ENCODE measurements at regions of chr6 and their contacts with region 1.

Region 1: DNA sequence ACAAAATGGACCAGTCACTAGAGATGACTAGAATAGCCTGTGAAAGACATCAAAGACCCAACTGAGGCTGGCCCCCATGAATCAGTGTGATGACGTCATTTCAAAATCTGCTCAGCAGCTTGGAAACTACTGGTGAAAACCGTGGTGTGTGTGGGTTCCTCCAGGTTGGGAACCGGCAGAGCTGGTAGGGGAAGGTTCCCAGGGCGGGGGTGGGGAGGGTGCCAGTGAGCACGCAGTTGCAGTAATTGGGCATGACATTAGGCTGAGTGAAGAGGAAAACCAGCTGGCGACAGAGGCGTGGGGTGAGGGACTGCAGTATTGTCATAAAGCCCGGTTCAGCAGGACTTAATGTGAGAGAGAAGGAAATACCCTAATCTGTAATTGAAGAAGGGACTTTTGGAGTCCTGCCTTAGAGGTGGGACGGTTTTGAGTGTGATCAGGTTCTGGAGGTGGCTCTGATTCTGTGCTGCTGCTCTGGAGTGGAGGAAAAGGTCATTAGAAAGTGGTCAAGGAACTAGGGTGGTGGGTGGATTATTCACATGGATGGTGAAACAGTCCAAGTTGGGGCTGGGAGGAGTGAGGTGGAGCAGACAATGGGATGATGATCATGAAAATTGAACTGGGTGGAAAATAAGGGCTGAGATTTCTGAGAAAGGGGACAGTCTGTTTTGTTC is 52.0 kb upstream of the MTHFD1L start:
- DNase-seq: no peak
- ATAC-seq: no peak
- H3K4me3 Mint-ChIP-seq: no peak overlapping the region
- H3K27ac Mint-ChIP-seq: no peak overlapping the region
- H3K4me1 Mint-ChIP-seq: peaks cover 7% of the 10 kb centered on the region; the same call in 1 of the 2 replicates
- H3K27me3 Mint-ChIP-seq: no peaks in the 10 kb centered on the region; the same call in 1 of the 2 replicates
- CTCF ChIP-seq: no peak

Region 2: GRCh38 chr6:150079604-150080003 is 733.9 kb before region 1 on chr6:
- CTCF ChIA-PET with region 1: interaction called, 12 read pairs
- POLR2A ChIA-PET with region 1: no interaction called
- DNase-seq: no peak
- ATAC-seq: peak; percentile 73
- H3K4me3 Mint-ChIP-seq: no peak overlapping the region
- H3K27ac Mint-ChIP-seq: no peak overlapping the region
- H3K4me1 Mint-ChIP-seq: peaks cover 11% of the 10 kb centered on the region; the same call in 1 of the 2 replicates
- H3K27me3 Mint-ChIP-seq: peaks cover 7% of the 10 kb centered on the region; the same call in 1 of the 2 replicates
- CTCF ChIP-seq: no peak

Region 3: GRCh38 chr6:150417899-150418826 is 395.3 kb before region 1 on chr6:
- CTCF ChIA-PET with region 1: interaction called, 40 read pairs
- POLR2A ChIA-PET with region 1: interaction called, 6 read pairs
- DNase-seq: no peak
- ATAC-seq: peak; percentile 67
- H3K4me3 Mint-ChIP-seq: no peak overlapping the region
- H3K27ac Mint-ChIP-seq: no peak overlapping the region
- H3K4me1 Mint-ChIP-seq: peaks cover 6% of the 10 kb centered on the region
- H3K27me3 Mint-ChIP-seq: no peaks in the 10 kb centered on the region
- CTCF ChIP-seq: no peak

Region 4: DNA sequence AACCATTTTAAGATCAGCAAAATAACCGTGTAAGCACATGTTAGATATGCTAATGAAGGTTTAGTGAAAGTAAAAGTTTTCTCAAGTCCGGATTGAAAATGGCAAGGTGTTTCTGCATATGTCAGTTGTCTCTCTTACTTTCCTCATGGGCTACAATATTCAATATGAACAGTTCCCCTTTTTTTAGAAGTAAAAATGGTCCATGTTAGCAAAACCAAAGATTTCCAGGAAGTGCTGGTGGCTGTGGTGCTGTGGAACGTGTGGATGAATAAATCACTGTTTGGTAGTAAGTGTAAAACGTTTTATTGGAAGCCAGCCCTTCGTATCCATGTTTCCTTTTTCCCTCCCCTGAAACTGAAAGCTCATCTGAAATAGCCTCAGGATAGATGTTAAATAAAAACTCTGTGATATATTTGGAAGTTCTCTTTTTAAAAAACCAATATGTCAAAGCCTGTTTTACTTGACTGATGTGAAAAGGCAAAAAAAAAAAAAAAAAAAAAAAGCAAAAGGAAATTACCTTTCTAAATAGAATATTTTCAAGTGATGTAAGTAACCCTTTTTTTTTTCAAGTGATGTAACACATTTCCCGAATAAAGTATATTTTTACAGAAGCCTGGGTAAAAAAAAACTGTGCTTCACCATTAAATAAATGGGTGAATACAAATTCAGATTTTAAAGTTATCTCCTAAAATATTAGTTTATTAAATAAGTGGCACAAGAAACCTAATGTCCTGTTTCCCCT is 171.9 kb before region 1 on chr6:
- CTCF ChIA-PET with region 1: no interaction called
- POLR2A ChIA-PET with region 1: no interaction called
- DNase-seq: no peak
- ATAC-seq: no peak
- H3K4me3 Mint-ChIP-seq: no peak overlapping the region
- H3K27ac Mint-ChIP-seq: no peak overlapping the region
- H3K4me1 Mint-ChIP-seq: peaks cover 4% of the 10 kb centered on the region
- H3K27me3 Mint-ChIP-seq: no peaks in the 10 kb centered on the region
- CTCF ChIP-seq: no peak

Region 5: DNA sequence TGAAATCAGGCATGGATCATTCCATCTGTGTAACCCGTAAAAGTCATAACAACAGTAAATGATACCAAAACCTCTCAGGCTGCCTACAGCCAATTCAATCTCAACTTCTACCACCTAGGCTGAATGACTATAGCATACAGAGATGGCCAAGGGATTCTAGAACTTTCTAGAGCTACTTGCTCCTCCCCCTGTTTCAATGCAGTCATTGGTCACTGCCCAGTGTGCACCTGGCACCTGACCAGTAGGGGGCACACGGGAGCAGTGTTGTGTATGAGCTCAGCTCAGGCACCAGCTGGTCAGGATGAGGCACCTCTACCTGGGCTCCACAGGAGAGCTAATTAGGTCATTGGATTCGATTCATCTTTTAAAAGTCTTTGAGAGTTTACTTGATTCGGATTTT is 127.6 kb before region 1 on chr6:
- CTCF ChIA-PET with region 1: interaction called, 43 read pairs
- POLR2A ChIA-PET with region 1: no interaction called
- DNase-seq: peak; percentile 87
- ATAC-seq: peak; percentile 98
- H3K4me3 Mint-ChIP-seq: no peak overlapping the region
- H3K27ac Mint-ChIP-seq: no peak overlapping the region
- H3K4me1 Mint-ChIP-seq: 0 out of 2 replicates have a peak, but pooled peaks cover 3% of the 10 kb centered on the region
- H3K27me3 Mint-ChIP-seq: no peaks in the 10 kb centered on the region
- CTCF ChIP-seq: peak; percentile 84

Region 6: DNA sequence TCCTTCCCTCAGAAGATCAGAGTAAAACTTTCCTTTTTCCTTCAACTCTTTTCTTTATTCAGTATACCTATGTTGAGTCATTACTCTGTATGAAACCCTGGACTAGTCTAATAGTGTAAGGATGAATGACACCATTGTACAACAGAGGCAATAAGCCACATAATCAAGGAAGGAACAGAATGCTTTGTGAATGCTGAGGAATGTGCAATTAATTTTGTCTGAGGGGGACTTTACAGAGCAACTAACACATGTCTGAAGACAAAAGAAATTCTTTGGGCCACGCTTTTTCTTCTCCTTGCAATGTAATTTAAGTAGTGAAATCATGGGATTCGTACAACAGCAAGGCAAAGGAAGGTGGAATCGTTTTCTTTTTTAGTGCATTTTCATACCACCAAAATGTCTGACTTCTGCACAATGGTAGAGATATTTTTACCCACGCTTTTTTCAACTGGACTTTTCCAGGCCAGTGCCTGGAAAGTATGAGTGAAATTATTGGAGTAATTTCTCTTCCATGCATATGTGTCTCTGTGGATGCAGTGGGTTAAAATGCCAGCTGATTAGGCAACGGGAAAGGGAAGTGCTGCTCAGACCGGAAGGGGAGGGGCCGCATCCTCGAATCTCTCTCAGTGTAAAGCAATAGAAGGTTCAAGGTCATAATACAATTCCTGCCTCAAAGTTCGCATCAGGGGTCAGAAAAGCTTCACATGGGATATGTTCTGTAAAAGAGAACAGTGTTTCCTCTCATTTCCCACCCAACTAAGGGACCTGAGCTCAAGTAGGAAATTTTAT is 37.8 kb before region 1 on chr6:
- CTCF ChIA-PET with region 1: no interaction called
- POLR2A ChIA-PET with region 1: no interaction called
- DNase-seq: no peak
- ATAC-seq: no peak
- H3K4me3 Mint-ChIP-seq: no peak overlapping the region
- H3K27ac Mint-ChIP-seq: no peak overlapping the region
- H3K4me1 Mint-ChIP-seq: 0 out of 2 replicates have a peak, but pooled peaks cover 2% of the 10 kb centered on the region
- H3K27me3 Mint-ChIP-seq: no peaks in the 10 kb centered on the region; the same call in 1 of the 2 replicates
- CTCF ChIP-seq: no peak

Region 7: DNA sequence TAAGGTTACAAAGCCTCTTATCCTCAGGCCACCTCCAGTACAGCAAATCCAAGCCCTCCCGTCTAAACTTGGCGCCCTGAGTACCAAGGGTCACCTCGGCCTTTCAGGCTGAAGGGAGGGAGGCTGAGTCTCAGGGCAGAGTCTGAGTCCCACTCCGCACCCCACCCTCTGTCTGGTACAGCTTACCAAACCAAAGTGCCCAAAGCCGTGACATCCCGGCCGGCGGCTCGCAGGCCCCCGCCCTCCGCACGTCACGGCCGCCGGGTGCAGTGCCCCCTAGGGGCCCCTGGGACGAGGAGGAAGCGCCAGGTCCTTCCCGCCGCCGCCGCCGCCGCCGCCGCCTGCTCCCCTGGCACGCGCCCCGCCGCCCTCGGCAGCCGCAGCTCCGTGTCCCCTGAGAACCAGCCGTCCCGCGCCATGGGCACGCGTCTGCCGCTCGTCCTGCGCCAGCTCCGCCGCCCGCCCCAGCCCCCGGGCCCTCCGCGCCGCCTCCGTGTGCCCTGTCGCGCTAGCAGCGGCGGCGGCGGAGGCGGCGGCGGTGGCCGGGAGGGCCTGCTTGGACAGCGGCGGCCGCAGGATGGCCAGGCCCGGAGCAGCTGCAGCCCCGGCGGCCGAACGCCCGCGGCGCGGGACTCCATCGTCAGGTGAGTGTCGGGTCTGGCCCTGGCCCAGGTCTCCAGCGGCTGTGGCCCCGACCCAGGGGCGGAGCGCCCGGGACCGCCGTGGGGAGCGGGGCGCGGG is 52.1 kb after region 1 on chr6 and contains the start of gene MTHFD1L:
- CTCF ChIA-PET with region 1: interaction called, 21 read pairs
- POLR2A ChIA-PET with region 1: interaction called, 3 read pairs
- DNase-seq: peak; percentile 81
- ATAC-seq: peak; percentile 75
- H3K4me3 Mint-ChIP-seq: peak within 1 kb of the TSS; percentile 88
- H3K27ac Mint-ChIP-seq: 0 out of 2 replicates have a peak within 1 kb of the TSS, but pooled peaks have one; percentile 70
- H3K4me1 Mint-ChIP-seq: peaks cover 12% of the 10 kb centered on the region
- H3K27me3 Mint-ChIP-seq: no peaks in the 10 kb centered on the region
- CTCF ChIP-seq: peak; percentile 50
- total RNA-seq, gene MTHFD1L: 83.2 to 104 TPM (median 88.0 TPM) in 3 replicates

Region 8: DNA sequence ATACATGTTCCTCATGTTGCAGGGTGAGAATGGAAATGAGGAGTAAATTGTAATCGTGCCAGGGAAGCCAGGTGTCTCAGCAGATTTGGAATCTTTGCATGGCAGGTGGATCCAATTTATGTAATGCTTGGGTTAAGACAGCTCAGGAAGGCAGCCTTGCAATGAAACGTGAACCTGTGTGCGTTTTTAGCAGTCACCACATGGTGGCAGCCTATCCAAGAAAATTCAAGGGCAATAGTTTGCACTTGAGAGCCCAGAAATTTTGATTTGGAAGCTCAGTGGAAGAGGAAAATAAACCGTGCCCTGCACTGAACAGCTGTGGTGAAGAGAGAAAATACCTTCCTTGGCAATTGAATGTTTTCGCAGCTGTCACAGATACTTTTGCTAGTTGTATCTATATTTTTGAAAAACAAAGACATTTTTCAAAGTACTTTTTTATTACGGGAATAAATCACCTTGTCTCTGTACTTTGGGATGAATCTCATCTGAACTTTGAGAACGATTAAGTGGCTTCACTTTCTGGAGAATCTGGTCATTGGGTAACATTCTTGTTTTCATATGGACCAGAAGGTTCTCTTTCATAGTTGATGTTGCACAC is 78.5 kb after region 1 on chr6:
- CTCF ChIA-PET with region 1: interaction called, 16 read pairs
- POLR2A ChIA-PET with region 1: no interaction called
- DNase-seq: peak; percentile 74
- ATAC-seq: peak; percentile 87
- H3K4me3 Mint-ChIP-seq: no peak overlapping the region
- H3K27ac Mint-ChIP-seq: no peak overlapping the region
- H3K4me1 Mint-ChIP-seq: no peaks in the 10 kb centered on the region
- H3K27me3 Mint-ChIP-seq: no peaks in the 10 kb centered on the region
- CTCF ChIP-seq: peak; percentile 82

Region 9: GRCh38 chr6:151014404-151015100 is 201.1 kb after region 1 on chr6:
- CTCF ChIA-PET with region 1: no interaction called
- POLR2A ChIA-PET with region 1: no interaction called
- DNase-seq: peak; percentile 77
- ATAC-seq: peak; percentile 85
- H3K4me3 Mint-ChIP-seq: no peak overlapping the region
- H3K27ac Mint-ChIP-seq: peak overlapping the region; percentile 79
- H3K4me1 Mint-ChIP-seq: peaks cover 12% of the 10 kb centered on the region
- H3K27me3 Mint-ChIP-seq: no peaks in the 10 kb centered on the region
- CTCF ChIP-seq: peak; percentile 96

Region 10: GRCh38 chr6:151136141-151136755 is 322.8 kb after region 1 on chr6:
- CTCF ChIA-PET with region 1: no interaction called
- POLR2A ChIA-PET with region 1: no interaction called
- DNase-seq: no peak
- ATAC-seq: peak; percentile 52
- H3K4me3 Mint-ChIP-seq: no peak overlapping the region
- H3K27ac Mint-ChIP-seq: peak overlapping the region; percentile 73; the same call in 1 of the 2 replicates
- H3K4me1 Mint-ChIP-seq: peaks cover 8% of the 10 kb centered on the region
- H3K27me3 Mint-ChIP-seq: no peaks in the 10 kb centered on the region; the same call in 1 of the 2 replicates
- CTCF ChIP-seq: no peak